Endothelial cell of umbilical vein (primary cell): ENCODE measurements at regions of chr2 and their contacts with region 1.

Region 1: GRCh38 chr2:96856776-96857673 is 791 bp downstream of the ANKRD39 start:
- DNase-seq: peak; percentile 25
- H3K4me3 ChIP-seq: peak overlapping the region; percentile 10 to 53 (median 51)
- H3K27ac ChIP-seq: peak overlapping the region; percentile 10
- H3K4me1 ChIP-seq: peaks cover 9% of the 10 kb centered on the region
- H3K27me3 ChIP-seq: no peaks in the 10 kb centered on the region
- CTCF ChIP-seq: no peak
- POLR2A ChIP-seq: no peak

Region 2: DNA sequence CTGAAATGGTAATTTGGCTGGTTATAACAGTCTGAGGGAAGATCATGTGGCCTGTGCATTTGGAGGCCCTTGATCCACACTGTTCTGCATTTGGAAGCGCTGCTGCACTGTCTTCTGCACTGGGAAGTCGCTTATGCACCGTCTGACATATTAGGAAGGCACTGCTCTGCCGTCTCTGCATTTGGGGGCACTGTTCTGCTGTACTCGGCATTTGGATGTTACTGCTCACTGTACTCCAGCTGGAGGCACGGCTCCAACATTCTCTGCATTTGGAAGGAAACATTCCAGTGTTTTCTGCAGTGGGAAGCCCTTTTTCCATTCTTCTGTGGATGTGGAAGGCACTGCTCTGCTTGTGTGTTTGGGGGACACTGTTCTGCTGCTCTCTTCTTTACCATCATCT is 1592.4 kb before region 1 on chr2:
- CTCF ChIA-PET with region 1: no interaction called
- POLR2A ChIA-PET with region 1: no interaction called
- dilution Hi-C with region 1: no loop called
- intact Hi-C with region 1: no loop called
- DNase-seq: no peak
- H3K4me3 ChIP-seq: no peak overlapping the region
- H3K27ac ChIP-seq: no peak overlapping the region
- H3K4me1 ChIP-seq: no peaks in the 10 kb centered on the region
- H3K27me3 ChIP-seq: no peaks in the 10 kb centered on the region
- CTCF ChIP-seq: no peak
- POLR2A ChIP-seq: no peak

Region 3: GRCh38 chr2:96760036-96760985 is 96.7 kb before region 1 on chr2 and contains the start of gene CNNM4:
- CTCF ChIA-PET with region 1: interaction called, 3 read pairs
- POLR2A ChIA-PET with region 1: no interaction called
- dilution Hi-C with region 1: no loop called
- intact Hi-C with region 1: loop called (anchors 2 kb)
- DNase-seq: peak; percentile 92
- H3K4me3 ChIP-seq: peak within 1 kb of the TSS in 2 of 3 experiments; percentile 31 to 32
- H3K27ac ChIP-seq: no peak within 1 kb of the TSS
- H3K4me1 ChIP-seq: peaks cover 16% of the 10 kb centered on the region
- H3K27me3 ChIP-seq: no peaks in the 10 kb centered on the region
- CTCF ChIP-seq: peak in 1 of 2 donors; percentile 14
- POLR2A ChIP-seq: peak; percentile 69
- total RNA-seq, gene CNNM4: 5.3 TPM in 2 replicates

Region 4: GRCh38 chr2:96816128-96816835 is 40.7 kb before region 1 on chr2 and contains the start of gene CNNM3:
- CTCF ChIA-PET with region 1: interaction called, 16 read pairs
- POLR2A ChIA-PET with region 1: interaction called, 6 read pairs
- dilution Hi-C with region 1: no loop called
- intact Hi-C with region 1: loop called (anchors 1 kb)
- DNase-seq: peak; percentile 95
- H3K4me3 ChIP-seq: peak within 1 kb of the TSS; percentile 52 to 82 (median 75)
- H3K27ac ChIP-seq: no peak within 1 kb of the TSS
- H3K4me1 ChIP-seq: peaks cover 13% of the 10 kb centered on the region
- H3K27me3 ChIP-seq: no peaks in the 10 kb centered on the region
- CTCF ChIP-seq: peak; percentile 45 to 76
- POLR2A ChIP-seq: peak; percentile 60
- total RNA-seq, gene CNNM3: 13.0 and 13.5 TPM in 2 replicates

Region 5: GRCh38 chr2:96874118-96874831 is 17.2 kb after region 1 on chr2:
- CTCF ChIA-PET with region 1: interaction called, 81 read pairs
- POLR2A ChIA-PET with region 1: no interaction called
- dilution Hi-C with region 1: no loop called
- intact Hi-C with region 1: no loop called
- DNase-seq: no peak
- H3K4me3 ChIP-seq: no peak overlapping the region
- H3K27ac ChIP-seq: no peak overlapping the region
- H3K4me1 ChIP-seq: peaks cover 4% of the 10 kb centered on the region
- H3K27me3 ChIP-seq: peaks cover 12 to 16% of the 10 kb centered on the region in 2 experiments
- CTCF ChIP-seq: no peak
- POLR2A ChIP-seq: no peak

Region 6: GRCh38 chr2:96951093-96951654 is 94.1 kb after region 1 on chr2:
- CTCF ChIA-PET with region 1: interaction called, 52 read pairs
- POLR2A ChIA-PET with region 1: no interaction called
- dilution Hi-C with region 1: no loop called
- intact Hi-C with region 1: loop called (anchors 1 kb)
- DNase-seq: peak; percentile 56
- H3K4me3 ChIP-seq: no peak overlapping the region
- H3K27ac ChIP-seq: no peak overlapping the region
- H3K4me1 ChIP-seq: no peaks in the 10 kb centered on the region
- H3K27me3 ChIP-seq: peaks cover 0 to 7% of the 10 kb centered on the region in 2 experiments
- CTCF ChIP-seq: peak; percentile 85 to 94
- POLR2A ChIP-seq: no peak